Psoas muscle (tissue), 8 donors: ENCODE measurements at regions of chr11 and their contacts with region 1.

Region 1: DNA sequence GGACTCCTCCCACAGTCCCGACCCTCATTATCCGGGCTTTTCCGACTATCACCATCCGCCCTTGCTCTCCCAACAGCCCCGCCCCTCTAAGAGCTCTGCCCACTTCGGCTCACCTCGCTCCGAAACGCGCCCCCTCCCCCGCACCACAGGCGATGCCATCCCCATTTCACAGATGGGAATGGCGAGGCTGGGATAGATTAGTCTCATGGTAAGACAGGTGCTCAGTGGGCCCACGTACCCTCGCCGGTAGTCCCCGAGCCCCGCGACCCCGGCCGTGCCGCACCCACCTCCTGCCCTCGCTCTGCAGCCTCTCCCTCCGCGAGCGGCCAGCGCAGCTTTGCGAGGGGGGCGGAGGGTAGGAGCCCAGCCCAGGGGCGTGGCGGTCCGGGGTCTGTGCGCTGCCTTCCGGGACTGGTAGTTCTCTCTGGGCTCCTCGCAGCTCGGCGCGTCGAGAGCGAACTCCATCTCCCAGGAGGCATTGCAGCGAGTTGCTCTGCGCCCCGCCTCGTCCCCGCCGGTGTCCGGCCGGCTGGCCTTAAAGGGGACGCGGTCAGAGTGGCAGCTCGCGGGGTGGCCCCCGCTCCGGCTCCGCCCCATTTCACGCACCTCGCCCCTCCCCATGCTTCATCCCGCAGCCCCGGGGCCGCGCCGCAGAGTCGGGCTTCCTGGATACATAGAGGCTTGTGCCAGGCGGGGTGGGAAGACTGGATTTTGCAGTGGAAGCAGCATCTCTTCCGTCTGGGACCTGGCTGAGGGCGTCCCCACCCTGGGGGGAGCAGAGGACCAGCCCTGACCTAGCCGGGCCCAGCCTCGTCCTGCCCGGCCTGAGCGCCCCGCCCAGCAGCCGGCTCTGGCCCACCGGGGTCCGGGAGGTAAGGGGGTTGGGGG is at the starts of genes KCTD21 and USP35:
- DNase-seq: peak; percentile 97 to 99
- ATAC-seq: peak; percentile 95 to 98 (median 96)
- H3K4me3 ChIP-seq: peak within 1 kb of the TSS; percentile 98
- H3K27ac ChIP-seq: peak within 1 kb of the TSS; percentile 79
- H3K4me1 ChIP-seq: peaks cover 41% of the 10 kb centered on the region
- H3K27me3 ChIP-seq: no peaks in the 10 kb centered on the region
- CTCF ChIP-seq: no peak
- total RNA-seq, gene KCTD21: 4.7 to 7.0 (median 5.8) TPM
- total RNA-seq, gene USP35: 2.0 to 4.4 (median 3.5) TPM

Region 2: DNA sequence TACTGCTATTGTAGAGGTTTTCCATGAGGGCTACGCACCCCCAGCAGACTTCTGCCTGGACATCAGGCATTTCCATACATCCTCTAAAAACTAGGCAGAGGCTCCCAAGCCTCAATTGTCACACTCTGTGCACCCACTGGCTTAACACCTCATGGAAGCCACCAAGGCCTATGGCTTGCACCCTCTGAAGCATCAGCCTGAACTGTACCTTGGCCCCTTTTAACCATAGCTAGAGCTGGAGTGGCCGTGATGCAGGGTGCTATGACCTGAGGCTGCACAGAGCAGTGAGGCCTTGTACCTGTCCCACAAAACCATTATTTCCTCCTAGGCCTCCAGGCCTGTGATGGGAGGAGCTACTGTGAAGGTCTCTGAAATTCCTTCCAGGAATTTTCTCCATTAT is 333.7 kb before region 1 on chr11:
- intact Hi-C with region 1: no loop called
- DNase-seq: no peak
- ATAC-seq: no peak
- H3K4me3 ChIP-seq: no peak overlapping the region
- H3K27ac ChIP-seq: no peak overlapping the region
- H3K4me1 ChIP-seq: peaks cover 14% of the 10 kb centered on the region
- H3K27me3 ChIP-seq: no peaks in the 10 kb centered on the region
- CTCF ChIP-seq: no peak

Region 3: DNA sequence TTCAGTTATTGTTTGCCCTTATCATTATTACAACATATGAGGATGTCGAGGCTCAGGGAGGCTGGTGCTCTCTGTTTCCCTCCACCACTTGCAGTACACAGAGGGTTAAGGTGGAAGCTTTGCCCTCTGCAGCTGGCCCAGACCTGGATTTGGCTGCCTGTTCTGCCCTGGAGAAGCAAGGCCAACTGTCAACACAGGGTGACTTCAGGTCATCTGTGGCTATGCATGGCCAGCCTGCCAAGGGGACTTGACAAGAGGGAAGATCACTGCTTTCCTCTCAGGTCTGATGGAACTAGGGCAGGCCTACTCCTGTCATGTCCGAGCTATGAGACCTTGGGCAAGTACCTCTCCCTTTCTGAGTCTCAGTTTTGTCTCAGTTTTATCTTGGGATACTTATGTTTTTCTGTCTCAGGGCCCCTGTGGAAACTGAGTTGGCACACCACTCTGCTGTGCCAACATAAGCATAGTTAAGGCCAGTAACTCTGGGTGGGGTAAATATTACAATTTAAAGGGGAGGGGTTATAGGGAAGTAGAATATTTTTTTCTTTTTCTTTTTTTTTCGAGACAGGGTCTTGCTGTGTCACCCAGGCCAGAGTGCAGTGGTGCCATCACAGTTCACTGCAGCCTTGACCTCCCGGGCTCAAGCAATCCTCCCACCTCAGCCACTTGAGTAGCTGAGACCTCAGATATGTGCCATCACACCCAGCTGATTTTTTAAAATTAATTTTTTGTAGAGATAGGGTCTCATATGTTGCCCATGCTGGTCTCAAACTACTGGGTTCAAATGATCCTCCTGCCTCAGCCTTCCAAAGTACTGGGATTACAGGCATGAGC is 127.2 kb before region 1 on chr11:
- intact Hi-C with region 1: loop called in 1 of 2 experiments (anchors 5 kb)
- DNase-seq: peak; percentile 45 to 87
- ATAC-seq: peak; percentile 87 to 89 (median 88)
- H3K4me3 ChIP-seq: no peak overlapping the region
- H3K27ac ChIP-seq: peak overlapping the region; percentile 80
- H3K4me1 ChIP-seq: peaks cover 39% of the 10 kb centered on the region
- H3K27me3 ChIP-seq: no peaks in the 10 kb centered on the region
- CTCF ChIP-seq: no peak

Region 4: DNA sequence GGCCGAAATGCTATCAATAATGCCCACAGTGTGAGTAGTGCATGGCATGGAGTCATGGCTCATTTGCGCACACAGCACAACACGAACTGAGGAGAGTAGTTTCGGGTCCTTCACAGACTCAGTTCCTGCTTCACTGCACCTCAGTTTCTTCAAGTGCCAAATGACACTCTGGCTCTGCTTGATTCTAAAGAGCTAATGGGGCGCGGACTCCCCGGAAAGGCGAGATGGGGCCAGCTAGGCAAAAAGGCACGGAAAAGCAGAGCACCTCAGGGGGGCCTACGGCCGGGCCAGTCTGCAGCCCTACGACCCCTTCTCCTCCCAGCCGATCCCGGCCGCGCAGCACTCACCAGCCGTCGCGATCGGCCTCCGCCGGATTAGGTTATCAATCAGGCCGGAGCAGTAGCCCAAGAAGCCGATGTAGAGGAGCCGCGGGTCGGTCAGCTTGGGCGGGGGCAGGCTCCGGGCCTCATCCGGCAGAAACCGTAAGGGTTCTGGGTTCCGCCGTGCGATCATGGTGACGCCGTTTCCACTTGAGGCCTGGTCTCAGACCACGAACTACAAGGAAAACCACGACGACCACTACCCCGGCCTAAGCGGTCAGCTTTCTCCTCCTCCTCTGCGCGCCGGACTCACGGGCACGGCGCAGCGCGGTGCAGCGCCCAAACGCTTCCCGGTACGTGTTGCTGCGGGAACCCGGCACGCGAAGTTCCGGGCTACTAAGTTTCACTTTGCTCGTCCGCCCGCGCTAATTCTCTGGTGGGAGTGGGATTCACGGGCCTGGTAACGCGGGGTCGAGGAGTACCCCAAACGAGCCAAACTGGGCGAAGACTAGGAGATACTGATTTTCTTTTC is 109.1 kb before region 1 on chr11 and contains the start of gene NDUFC2:
- intact Hi-C with region 1: loop called in 1 of 2 experiments (anchors 5 kb)
- DNase-seq: peak; percentile 82 to 90
- ATAC-seq: peak; percentile 94 to 98 (median 96)
- H3K4me3 ChIP-seq: peak within 1 kb of the TSS; percentile 81
- H3K27ac ChIP-seq: peak within 1 kb of the TSS; percentile 79
- H3K4me1 ChIP-seq: peaks cover 35% of the 10 kb centered on the region
- H3K27me3 ChIP-seq: no peaks in the 10 kb centered on the region
- CTCF ChIP-seq: no peak
- total RNA-seq, gene NDUFC2: 223 to 309 (median 252) TPM

Region 5: GRCh38 chr11:78112582-78113275 is 75.8 kb before region 1 on chr11:
- intact Hi-C with region 1: no loop called
- DNase-seq: no peak
- ATAC-seq: no peak
- H3K4me3 ChIP-seq: no peak overlapping the region
- H3K27ac ChIP-seq: no peak overlapping the region
- H3K4me1 ChIP-seq: no peaks in the 10 kb centered on the region
- H3K27me3 ChIP-seq: no peaks in the 10 kb centered on the region
- CTCF ChIP-seq: no peak